ENCODE measurements at regions of chr10 and their contacts with region 1.

Region 1: DNA sequence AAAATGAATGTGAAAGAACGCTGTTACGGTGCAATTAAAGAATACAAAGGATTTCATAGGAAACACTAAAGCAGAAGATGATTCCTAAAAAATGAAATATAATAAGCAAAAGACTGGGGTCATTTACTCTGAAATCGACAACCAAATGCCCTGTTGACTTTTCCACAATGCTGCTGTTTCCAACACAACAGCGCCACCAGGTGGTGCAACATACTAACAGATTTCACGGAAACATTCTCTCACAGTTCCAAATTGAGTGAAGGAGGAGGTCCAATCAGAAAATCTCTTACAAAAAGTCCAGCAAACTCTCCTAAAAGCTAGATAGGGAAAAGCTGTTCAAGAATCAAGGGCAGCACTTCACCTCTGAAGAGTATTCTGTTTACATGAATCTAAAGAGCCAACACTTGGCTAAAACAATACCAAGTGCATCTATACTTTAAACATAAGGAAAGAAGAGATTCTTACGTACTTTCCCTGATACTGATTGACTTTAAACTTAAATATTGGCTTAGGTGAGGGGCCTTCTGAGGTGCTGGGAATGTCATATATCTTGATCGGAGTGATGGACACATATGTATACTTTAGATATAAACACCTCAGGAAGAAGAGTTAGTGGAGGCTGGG is 55.9 kb downstream of the UPF2 start:
- DNase-seq: peak; percentile 75
- CTCF ChIP-seq: peak; percentile 72

Region 2: GRCh38 chr10:11625019-11625735 is 361.5 kb before region 1 on chr10:
- in situ Hi-C with region 1: no loop called
- DNase-seq: peak; percentile 59
- CTCF ChIP-seq: no peak

Region 3: DNA sequence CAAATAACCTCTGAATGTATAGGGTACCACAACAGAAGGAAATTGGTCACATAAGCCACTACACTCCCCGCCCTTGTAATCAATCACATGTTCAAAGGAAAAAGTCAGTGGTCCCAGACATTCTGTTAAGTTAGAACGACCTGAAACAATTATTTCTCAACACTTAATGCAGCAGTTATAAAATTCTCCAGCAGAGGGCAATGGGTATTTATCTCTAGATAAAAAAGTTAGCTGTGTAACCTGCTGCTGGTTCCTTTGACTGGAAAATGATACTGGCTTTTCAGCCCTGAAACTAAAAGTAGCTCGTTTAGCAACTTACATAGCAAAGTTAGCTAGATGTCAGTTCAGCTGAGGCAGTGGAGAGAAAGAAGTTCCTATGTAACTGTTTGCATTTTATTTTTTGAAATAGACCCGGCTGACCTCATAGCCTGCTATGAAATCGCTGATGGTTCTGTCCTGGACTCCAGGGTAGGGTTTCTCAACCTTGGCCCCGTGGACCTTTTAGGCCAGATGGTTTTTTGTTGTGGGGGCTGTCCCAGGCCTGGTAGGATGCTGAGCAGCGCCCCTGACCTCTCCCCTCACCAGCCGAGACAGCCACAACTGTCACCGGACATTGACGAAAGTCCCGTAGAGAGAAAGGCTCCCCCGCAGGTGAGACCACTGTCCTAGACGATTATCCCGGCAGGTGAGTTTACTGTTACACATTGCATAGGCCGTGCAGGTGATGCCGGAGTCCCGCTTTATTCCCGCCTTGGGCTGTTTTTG is 203.7 kb before region 1 on chr10:
- in situ Hi-C with region 1: loop called (anchors 10 kb)
- DNase-seq: peak; percentile 74
- CTCF ChIP-seq: peak; percentile 56

Region 4: DNA sequence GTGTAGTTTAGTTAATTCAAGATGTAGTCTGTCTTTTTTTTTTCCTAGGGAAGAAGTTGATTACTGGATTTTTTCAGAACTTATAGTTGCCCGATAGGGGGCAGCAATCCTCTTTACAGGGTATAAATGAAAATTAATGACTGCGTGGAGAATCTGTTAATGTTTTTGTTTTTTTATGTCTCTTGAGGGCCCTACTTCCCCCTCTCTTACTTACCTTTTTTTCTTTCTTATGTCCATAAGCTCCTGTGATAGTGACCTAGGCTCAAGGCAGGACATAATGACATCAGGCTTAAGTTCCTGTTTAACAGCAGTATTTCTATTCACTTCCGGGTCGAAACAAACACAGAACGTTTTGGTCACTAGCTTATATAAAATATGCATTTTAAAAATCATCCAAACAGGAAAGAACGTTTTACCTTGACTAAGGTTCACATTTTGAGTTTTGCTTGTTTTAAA is 228.1 kb after region 1 on chr10:
- in situ Hi-C with region 1: no loop called
- DNase-seq: no peak
- CTCF ChIP-seq: peak; percentile 32

Region 5: GRCh38 chr10:12375076-12375504 is 388.4 kb after region 1 on chr10:
- in situ Hi-C with region 1: no loop called
- DNase-seq: no peak
- CTCF ChIP-seq: no peak

Region 6: DNA sequence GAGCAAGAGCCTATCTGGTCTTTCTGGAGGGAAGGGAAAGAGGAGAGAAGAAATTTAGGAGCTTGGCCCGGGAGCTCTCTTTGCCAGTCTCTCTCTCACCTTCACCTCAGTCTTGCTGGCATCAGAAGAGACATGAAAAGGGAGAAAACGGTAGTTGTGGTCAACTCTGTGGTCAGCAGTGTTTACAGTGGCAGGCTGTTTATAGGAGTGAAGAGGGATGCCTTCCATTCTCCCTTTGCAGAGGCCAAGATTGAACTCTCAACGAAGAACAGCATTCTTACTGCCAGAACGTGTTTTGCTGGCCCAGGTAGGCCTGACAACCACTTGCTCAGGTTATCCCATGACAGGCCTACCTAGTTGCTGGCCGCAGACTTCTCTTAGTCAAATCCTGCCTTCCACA is 881.5 kb after region 1 on chr10:
- in situ Hi-C with region 1: no loop called
- DNase-seq: no peak
- CTCF ChIP-seq: no peak